ENCODE measurements at regions of chr22 and their contacts with region 1.

Region 1: GRCh38 chr22:38201710-38202436 is at the start of gene MAFF:
- DNase-seq: peak; percentile 95
- H3K4me3 Mint-ChIP-seq: peak within 1 kb of the TSS; percentile 89
- H3K27ac Mint-ChIP-seq: peak within 1 kb of the TSS; percentile 91
- H3K4me1 Mint-ChIP-seq: peaks cover 30% of the 10 kb centered on the region
- H3K27me3 Mint-ChIP-seq: no peaks in the 10 kb centered on the region
- total RNA-seq, gene MAFF: 12.6 and 12.8 TPM in 2 replicates

Region 2: DNA sequence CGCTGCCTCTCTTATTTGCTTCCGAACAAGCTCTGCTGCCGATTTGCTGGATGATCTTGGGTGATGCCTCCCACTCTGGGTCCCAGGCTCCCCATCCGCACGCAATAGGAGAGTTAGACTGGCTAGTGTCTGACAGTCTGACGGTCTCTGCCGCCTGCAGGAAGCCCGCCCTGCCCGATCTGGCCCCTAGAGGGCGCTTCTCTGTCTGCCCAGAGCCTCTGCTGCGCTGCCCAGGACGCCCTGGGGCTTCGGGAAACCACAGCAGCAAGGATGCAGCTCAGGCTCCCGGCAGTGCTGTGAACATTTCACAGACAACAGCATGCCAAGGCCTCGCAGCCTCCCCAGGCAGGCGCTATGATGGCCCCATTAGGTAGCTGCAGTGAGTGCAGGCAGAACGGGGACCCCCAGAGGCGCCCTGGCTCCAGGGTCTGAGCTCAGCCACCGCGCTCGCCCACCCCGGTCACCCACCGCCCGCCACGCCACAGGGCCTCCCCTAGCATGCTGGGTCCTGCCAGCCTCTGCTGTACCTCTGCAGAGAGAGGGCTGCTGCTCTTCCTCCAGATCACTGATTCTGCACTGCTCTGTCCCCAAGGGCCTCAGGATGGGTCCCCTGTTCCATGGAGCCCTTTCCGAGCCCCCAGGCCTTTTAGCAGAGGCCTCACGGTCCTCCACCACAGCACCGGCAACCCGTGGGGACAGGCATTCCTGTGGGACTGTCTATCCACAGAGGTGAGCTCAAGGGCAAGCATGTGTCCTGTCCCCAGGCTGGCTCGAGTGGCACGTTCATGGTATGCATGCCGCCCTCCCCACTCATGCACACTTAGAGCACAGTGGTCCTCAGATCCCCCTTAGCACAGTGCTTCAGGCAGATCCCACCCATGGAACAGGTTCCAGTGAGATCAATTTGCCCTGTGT is 87.1 kb before region 1 on chr22:
- intact Hi-C with region 1: loop called (anchors 10 kb)
- DNase-seq: peak; percentile 94
- H3K4me3 Mint-ChIP-seq: no peak overlapping the region
- H3K27ac Mint-ChIP-seq: no peak overlapping the region
- H3K4me1 Mint-ChIP-seq: no peaks in the 10 kb centered on the region
- H3K27me3 Mint-ChIP-seq: no peaks in the 10 kb centered on the region

Region 3: DNA sequence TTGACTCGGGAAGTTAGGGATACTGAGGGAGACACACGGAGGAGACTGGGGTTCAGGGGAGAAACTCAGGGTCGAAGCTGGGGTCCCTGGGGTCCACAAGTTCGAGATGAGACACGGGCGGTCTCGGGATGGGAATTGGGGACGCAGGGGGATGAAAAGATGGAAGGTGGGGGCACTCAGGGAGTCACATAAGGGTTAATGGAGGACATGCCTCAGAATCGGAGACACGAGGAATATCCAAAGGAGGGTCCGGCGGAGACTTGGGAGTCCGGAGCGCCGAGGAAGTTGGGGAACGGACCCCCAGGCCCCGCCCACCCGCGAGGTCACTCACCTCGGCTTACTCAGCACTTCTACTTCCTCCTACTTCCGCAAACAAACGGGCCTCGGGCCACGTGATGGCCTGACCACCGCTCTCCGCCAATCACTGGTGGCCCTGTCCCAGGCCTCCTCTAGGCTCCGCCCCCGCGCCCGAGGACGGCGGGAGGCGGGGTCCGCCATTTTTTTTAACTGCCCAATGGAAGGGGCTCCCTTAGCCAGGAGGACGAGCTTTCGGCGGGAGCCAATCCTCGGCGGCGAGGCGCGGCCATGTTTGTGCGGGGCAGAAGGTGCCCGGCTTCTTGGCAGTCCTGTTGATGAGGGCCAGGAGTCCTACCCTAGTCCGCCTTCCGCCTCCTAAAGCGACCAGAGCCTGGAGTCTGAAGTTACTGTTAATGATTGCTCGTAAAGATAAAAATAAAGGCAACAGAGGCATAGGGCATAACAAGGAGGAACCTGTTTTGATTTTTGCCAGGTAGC is 20.2 kb before region 1 on chr22 and contains the start of gene PLA2G6:
- intact Hi-C with region 1: loop called (anchors 1 kb)
- DNase-seq: peak; percentile 100
- H3K4me3 Mint-ChIP-seq: peak within 1 kb of the TSS; percentile 98
- H3K27ac Mint-ChIP-seq: peak within 1 kb of the TSS; percentile 98
- H3K4me1 Mint-ChIP-seq: peaks cover 37% of the 10 kb centered on the region
- H3K27me3 Mint-ChIP-seq: peaks cover 8% of the 10 kb centered on the region
- total RNA-seq, gene PLA2G6: 34.3 and 43.2 TPM in 2 replicates

Region 4: GRCh38 chr22:38214256-38215056 is 12.6 kb after region 1 on chr22:
- intact Hi-C with region 1: no loop called
- DNase-seq: peak; percentile 86
- H3K4me3 Mint-ChIP-seq: peak overlapping the region; percentile 30
- H3K27ac Mint-ChIP-seq: no peak overlapping the region
- H3K4me1 Mint-ChIP-seq: peaks cover 27% of the 10 kb centered on the region
- H3K27me3 Mint-ChIP-seq: no peaks in the 10 kb centered on the region